Activated CD8-positive, alpha-beta memory T cell treated with anti-CD3 and anti-CD28 coated beads, Interleukin-2, amount 10 ng/mL, durations not matched to agents 7 days and 5 days (primary cell): ENCODE measurements at regions of chr14 and their contacts with region 1.

Region 1: DNA sequence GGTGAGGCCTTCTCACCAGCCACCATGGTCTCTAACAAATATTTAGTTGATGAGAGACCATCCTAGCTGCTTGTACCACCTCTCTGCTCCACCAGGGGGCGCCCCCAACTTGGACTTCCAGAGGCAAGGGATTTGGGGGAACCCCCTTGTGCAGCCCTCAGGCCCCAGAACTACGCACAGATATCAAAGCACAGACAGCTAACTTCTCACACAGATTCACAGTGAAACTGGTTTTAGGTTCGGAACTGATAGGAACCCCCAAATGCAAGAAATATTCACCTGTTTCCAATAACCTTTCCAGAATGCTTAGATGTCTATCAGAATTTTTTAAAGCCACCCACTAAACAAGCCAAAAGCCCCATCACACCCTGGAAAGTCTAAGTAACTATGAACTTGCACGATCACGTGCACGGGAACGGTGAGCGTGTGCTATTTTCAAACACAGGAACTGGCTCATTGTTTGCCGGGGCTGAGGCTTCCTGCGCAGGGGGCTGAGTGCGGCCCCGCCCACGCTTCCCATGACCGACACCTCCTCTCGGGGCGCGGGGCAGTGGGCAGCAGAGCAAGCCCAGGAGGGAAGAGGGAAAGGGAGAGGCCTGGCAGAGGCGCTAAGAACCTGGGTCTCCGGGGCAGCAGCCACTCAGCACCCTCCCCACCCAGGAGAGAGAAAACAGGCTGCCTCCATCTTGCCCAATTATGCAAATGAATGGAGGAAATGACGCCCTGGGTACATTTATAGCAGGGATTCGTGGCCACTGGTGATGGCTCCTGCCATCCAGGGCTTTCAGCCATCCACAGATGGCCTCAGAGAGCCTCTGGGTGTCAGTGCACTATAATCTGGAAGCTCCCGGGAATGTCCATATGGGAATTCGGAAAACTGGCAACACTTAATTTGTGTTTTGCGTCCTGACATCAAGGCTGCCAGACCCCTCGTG is 79.4 kb upstream of the GPR68 start:
- DNase-seq: peak; percentile 95
- ATAC-seq: peak; percentile 84
- H3K4me3 Mint-ChIP-seq: peak overlapping the region; percentile 72
- H3K27ac Mint-ChIP-seq: peak overlapping the region; percentile 97
- H3K4me1 Mint-ChIP-seq: peaks cover 65% of the 10 kb centered on the region
- H3K27me3 Mint-ChIP-seq: no peaks in the 10 kb centered on the region

Region 2: GRCh38 chr14:91311284-91311662 is 12.7 kb before region 1 on chr14:
- CTCF ChIA-PET with region 1: interaction called, 10 read pairs
- DNase-seq: peak; percentile 86
- ATAC-seq: peak; percentile 60
- H3K4me3 Mint-ChIP-seq: peak overlapping the region; percentile 27
- H3K27ac Mint-ChIP-seq: peak overlapping the region; percentile 90
- H3K4me1 Mint-ChIP-seq: peaks cover 64% of the 10 kb centered on the region
- H3K27me3 Mint-ChIP-seq: no peaks in the 10 kb centered on the region

Region 3: GRCh38 chr14:91350813-91351511 is 27.0 kb after region 1 on chr14:
- CTCF ChIA-PET with region 1: interaction called, 73 read pairs
- DNase-seq: peak; percentile 90
- ATAC-seq: peak; percentile 74
- H3K4me3 Mint-ChIP-seq: peak overlapping the region; percentile 71
- H3K27ac Mint-ChIP-seq: peak overlapping the region; percentile 97
- H3K4me1 Mint-ChIP-seq: peaks cover 96% of the 10 kb centered on the region
- H3K27me3 Mint-ChIP-seq: no peaks in the 10 kb centered on the region

Region 4: GRCh38 chr14:91396959-91397815 is 73.2 kb after region 1 on chr14:
- CTCF ChIA-PET with region 1: interaction called, 46 read pairs
- DNase-seq: peak; percentile 87
- ATAC-seq: peak; percentile 77
- H3K4me3 Mint-ChIP-seq: peak overlapping the region; percentile 99
- H3K27ac Mint-ChIP-seq: peak overlapping the region; percentile 82
- H3K4me1 Mint-ChIP-seq: peaks cover 85% of the 10 kb centered on the region
- H3K27me3 Mint-ChIP-seq: no peaks in the 10 kb centered on the region

Region 5: GRCh38 chr14:91410771-91411536 is 87.0 kb after region 1 on chr14:
- CTCF ChIA-PET with region 1: interaction called, 175 read pairs
- DNase-seq: no peak
- ATAC-seq: peak; percentile 14
- H3K4me3 Mint-ChIP-seq: peak overlapping the region; percentile 74
- H3K27ac Mint-ChIP-seq: peak overlapping the region; percentile 95
- H3K4me1 Mint-ChIP-seq: peaks cover 88% of the 10 kb centered on the region
- H3K27me3 Mint-ChIP-seq: no peaks in the 10 kb centered on the region

Region 6: GRCh38 chr14:91424813-91425530 is 101.0 kb after region 1 on chr14:
- CTCF ChIA-PET with region 1: interaction called, 28 read pairs
- DNase-seq: peak; percentile 34
- ATAC-seq: no peak
- H3K4me3 Mint-ChIP-seq: no peak overlapping the region
- H3K27ac Mint-ChIP-seq: no peak overlapping the region
- H3K4me1 Mint-ChIP-seq: peaks cover 8% of the 10 kb centered on the region
- H3K27me3 Mint-ChIP-seq: no peaks in the 10 kb centered on the region